ENCODE measurements at regions of chr11 and their contacts with region 1.

Region 1: GRCh38 chr11:130002846-130003716 is 446 bp upstream of the PRDM10 start:
- DNase-seq: peak; percentile 81 to 97 (median 88)
- ATAC-seq: peak; percentile 78
- H3K4me3 ChIP-seq: peak overlapping the region; percentile 76
- H3K4me3 Mint-ChIP-seq: peak overlapping the region; percentile 100
- H3K27ac ChIP-seq: peak overlapping the region; percentile 98 to 100
- H3K27ac Mint-ChIP-seq: peak overlapping the region; percentile 100
- H3K4me1 ChIP-seq: peaks cover 23% of the 10 kb centered on the region
- H3K4me1 Mint-ChIP-seq: peaks cover 44% of the 10 kb centered on the region
- H3K27me3 ChIP-seq: no peaks in the 10 kb centered on the region
- H3K27me3 Mint-ChIP-seq: no peaks in the 10 kb centered on the region
- CTCF ChIP-seq: no peak

Region 2: DNA sequence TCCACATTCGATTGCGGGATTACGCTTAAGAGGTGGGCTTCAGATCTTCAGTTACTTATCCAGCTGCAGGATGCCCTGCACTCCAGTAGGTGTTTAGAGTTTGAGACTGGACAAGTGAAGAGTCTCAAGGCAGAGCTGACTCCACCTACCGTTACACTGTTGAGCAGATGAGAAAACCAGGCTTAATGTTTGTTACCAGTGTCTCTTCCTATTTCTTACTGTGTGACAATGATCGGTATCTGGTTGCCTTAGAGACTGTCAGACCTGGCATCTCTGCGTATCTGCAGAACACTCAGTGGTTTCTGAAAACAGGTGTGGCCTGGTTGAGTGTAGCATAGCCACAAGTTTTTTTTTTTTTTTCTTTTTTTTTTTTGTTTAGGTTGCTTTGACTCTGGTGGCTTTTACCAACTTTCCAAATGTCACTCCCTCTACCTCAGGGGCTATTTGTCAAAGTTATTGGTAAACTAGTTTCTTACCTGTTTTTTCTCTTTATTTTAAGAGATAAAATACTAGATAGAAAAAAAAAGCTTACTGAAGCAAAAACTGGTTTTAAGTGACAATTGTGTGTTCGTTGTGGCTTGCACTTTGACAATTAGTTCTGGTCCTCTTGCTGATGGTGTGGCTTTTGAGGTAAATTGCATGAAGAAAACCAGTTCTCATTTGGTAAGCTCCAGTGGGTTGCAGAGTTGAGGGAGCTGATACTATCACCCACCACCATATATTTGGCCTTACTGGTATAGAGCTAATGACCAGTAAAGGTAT is 1700.5 kb before region 1 on chr11:
- CTCF ChIA-PET with region 1: no interaction called
- POLR2A ChIA-PET with region 1: no interaction called
- intact Hi-C with region 1: loop called in 1 of 2 experiments (anchors 10 kb)
- DNase-seq: peak; percentile 49 to 97 (median 65)
- ATAC-seq: peak; percentile 85
- H3K4me3 ChIP-seq: peak overlapping the region; percentile 65
- H3K4me3 Mint-ChIP-seq: peak overlapping the region; percentile 94
- H3K27ac ChIP-seq: peak overlapping the region; percentile 90 to 94
- H3K27ac Mint-ChIP-seq: peak overlapping the region; percentile 100
- H3K4me1 ChIP-seq: peaks cover 82% of the 10 kb centered on the region
- H3K4me1 Mint-ChIP-seq: peaks cover 98% of the 10 kb centered on the region
- H3K27me3 ChIP-seq: no peaks in the 10 kb centered on the region
- H3K27me3 Mint-ChIP-seq: no peaks in the 10 kb centered on the region
- CTCF ChIP-seq: peak; percentile 46

Region 3: GRCh38 chr11:129815596-129816461 is 187.3 kb before region 1 on chr11 and contains the start of gene TMEM45B:
- CTCF ChIA-PET with region 1: no interaction called
- POLR2A ChIA-PET with region 1: interaction called, 6 read pairs
- intact Hi-C with region 1: loop called (anchors 5 to 10 kb)
- DNase-seq: peak in 13 of 14 experiments; percentile 14 to 62 (median 33)
- ATAC-seq: peak; percentile 35
- H3K4me3 ChIP-seq: peak within 1 kb of the TSS; percentile 54
- H3K4me3 Mint-ChIP-seq: peak within 1 kb of the TSS; percentile 89
- H3K27ac ChIP-seq: no peak within 1 kb of the TSS
- H3K27ac Mint-ChIP-seq: peak within 1 kb of the TSS; percentile 95
- H3K4me1 ChIP-seq: peaks cover 38% of the 10 kb centered on the region
- H3K4me1 Mint-ChIP-seq: peaks cover 58% of the 10 kb centered on the region
- H3K27me3 ChIP-seq: peaks cover 5 to 9% of the 10 kb centered on the region in 2 experiments
- H3K27me3 Mint-ChIP-seq: peaks cover 40% of the 10 kb centered on the region
- CTCF ChIP-seq: no peak
- total RNA-seq, gene TMEM45B: 1.7 to 1.9 TPM

Region 4: DNA sequence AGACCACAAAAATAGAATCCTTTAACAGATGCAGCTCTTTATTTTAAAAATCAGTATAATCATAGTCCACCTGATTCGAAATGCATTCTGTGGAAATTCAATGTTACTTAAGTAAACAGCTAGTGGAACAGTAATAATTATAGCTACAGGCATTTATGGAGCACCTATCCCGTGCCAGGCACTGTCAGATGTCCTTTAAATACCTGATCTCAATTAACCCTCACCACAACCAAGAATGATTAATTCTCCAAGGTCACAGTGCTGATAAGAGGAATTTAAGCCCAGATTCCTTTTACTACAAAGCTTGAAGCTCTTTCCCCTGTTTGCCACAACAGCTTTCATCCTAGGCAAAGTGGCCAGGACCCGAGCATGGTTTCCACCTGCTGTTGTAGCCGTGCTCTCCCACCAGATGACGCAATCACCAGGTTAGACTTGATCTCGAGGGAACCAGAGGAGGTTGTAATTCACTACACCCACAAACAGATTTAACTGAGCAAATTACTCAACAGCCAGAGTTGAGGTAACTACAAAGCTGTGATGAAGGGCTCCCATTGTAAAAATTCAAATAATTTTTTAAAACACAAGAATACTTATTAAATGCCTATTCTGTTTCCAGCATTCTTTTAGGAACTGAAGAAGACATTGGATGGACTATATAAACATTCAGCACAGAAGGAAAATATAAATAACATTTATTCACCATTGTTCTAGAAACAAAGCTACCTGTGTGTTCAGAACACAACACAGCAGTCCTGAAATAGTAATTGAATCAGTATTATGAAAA is 10.7 kb before region 1 on chr11:
- CTCF ChIA-PET with region 1: interaction called, 15 read pairs
- POLR2A ChIA-PET with region 1: interaction called, 36 read pairs
- intact Hi-C with region 1: no loop called
- DNase-seq: peak; percentile 16 to 71 (median 36)
- ATAC-seq: peak; percentile 98
- H3K4me3 ChIP-seq: no peak overlapping the region
- H3K4me3 Mint-ChIP-seq: no peak overlapping the region
- H3K27ac ChIP-seq: no peak overlapping the region
- H3K27ac Mint-ChIP-seq: no peak overlapping the region
- H3K4me1 ChIP-seq: no peaks in the 10 kb centered on the region
- H3K4me1 Mint-ChIP-seq: peaks cover 29% of the 10 kb centered on the region
- H3K27me3 ChIP-seq: no peaks in the 10 kb centered on the region
- H3K27me3 Mint-ChIP-seq: no peaks in the 10 kb centered on the region
- CTCF ChIP-seq: peak; percentile 41

Region 5: GRCh38 chr11:130314750-130315285 is 311.7 kb after region 1 on chr11 and contains the start of gene ZBTB44:
- CTCF ChIA-PET with region 1: no interaction called
- POLR2A ChIA-PET with region 1: no interaction called
- intact Hi-C with region 1: loop called (anchors 5 to 10 kb)
- DNase-seq: peak; percentile 87 to 95 (median 92)
- ATAC-seq: peak; percentile 78
- H3K4me3 ChIP-seq: peak within 1 kb of the TSS; percentile 80
- H3K4me3 Mint-ChIP-seq: peak within 1 kb of the TSS; percentile 93
- H3K27ac ChIP-seq: peak within 1 kb of the TSS; percentile 69 to 87
- H3K27ac Mint-ChIP-seq: peak within 1 kb of the TSS; percentile 97
- H3K4me1 ChIP-seq: peaks cover 16% of the 10 kb centered on the region
- H3K4me1 Mint-ChIP-seq: peaks cover 48% of the 10 kb centered on the region
- H3K27me3 ChIP-seq: no peaks in the 10 kb centered on the region
- H3K27me3 Mint-ChIP-seq: no peaks in the 10 kb centered on the region
- CTCF ChIP-seq: no peak
- total RNA-seq, gene ZBTB44: 33.9 to 41.6 TPM

Measured in CD4-positive, alpha-beta T cell (primary cell).